Activated T-helper 1 cell treated with anti-CD3 and anti-CD28 coated beads, Interleukin-12 subunit alpha, Interleukin-12 subunit beta, Interleukin-2, Interleukin-4 antibody, amounts not matched to agents 30 ng/mL and 10 ng/mL and 1 ng/mL, durations not matched to agents 14 hours and 24 hours and 36 hours (primary cell): ENCODE measurements at regions of chr10 and their contacts with region 1.

Region 1: GRCh38 chr10:45500304-45500703 is 126.3 kb downstream of the ALOX5 start:
- DNase-seq: no peak
- H3K4me3 Mint-ChIP-seq: no peak overlapping the region
- H3K27ac Mint-ChIP-seq: no peak overlapping the region
- H3K4me1 Mint-ChIP-seq: peaks cover 7% of the 10 kb centered on the region
- H3K27me3 Mint-ChIP-seq: peaks cover 3% of the 10 kb centered on the region

Region 2: GRCh38 chr10:45487738-45488137 is 12.6 kb before region 1 on chr10:
- intact Hi-C with region 1: loop called (anchors 1 kb)
- DNase-seq: no peak
- H3K4me3 Mint-ChIP-seq: no peak overlapping the region
- H3K27ac Mint-ChIP-seq: no peak overlapping the region
- H3K4me1 Mint-ChIP-seq: no peaks in the 10 kb centered on the region
- H3K27me3 Mint-ChIP-seq: peaks cover 2% of the 10 kb centered on the region

Region 3: DNA sequence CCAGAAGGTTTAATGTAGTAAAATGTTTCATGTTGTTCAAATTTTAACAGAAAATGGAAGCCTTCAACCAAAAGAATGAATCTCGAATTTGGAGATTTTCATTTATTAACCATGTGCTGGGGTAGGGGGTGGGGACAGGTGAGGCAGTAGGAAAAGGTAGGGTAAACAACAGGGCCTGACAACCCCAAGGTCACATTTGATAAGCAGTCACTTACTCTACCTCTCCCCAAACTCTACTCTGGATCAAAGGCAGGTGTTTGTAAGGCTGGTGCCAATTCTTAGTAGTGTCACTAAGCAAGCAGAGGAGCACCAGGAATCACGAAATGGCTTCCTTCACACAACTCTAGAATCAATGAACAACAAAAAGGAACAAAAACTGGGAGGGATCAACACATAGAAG is 34.3 kb after region 1 on chr10:
- intact Hi-C with region 1: no loop called
- DNase-seq: no peak
- H3K4me3 Mint-ChIP-seq: no peak overlapping the region
- H3K27ac Mint-ChIP-seq: no peak overlapping the region
- H3K4me1 Mint-ChIP-seq: no peaks in the 10 kb centered on the region
- H3K27me3 Mint-ChIP-seq: no peaks in the 10 kb centered on the region